ENCODE measurements at regions of chr22 and their contacts with region 1.

Region 1: DNA sequence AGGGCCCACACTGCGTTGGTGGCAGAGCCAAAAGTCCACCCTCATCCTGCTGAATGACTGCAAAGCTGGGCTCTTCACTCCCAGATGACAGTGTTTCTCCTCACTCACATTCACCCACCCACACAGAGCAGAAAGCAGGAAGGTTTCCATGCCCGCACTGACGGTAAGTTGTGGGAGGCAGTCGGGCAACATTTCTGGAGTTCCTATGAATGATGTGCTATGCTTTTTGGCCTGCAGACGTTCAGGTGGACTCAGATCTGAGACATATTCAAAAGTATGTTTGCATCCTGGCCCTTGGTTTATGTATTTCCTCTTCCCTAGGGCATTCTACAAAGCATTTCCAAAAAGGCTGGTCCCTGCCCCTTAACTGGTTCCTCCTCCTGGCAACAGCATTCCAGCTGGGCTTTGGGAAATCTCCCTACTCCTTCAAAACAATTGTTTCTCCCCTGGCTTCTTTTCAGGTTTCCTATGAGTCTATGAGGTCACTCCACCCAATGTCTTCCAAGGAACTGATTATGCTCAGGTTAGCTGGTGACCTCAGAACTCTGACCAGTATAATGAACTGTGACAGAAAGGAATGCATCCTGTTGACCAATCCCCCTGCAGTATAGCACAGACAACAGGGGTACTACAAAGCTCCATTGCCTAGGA is 36.4 kb downstream of the PACSIN2 start:
- DNase-seq: no peak
- ATAC-seq: peak; percentile 75 to 85
- H3K4me3 ChIP-seq: no peak overlapping the region
- H3K27ac ChIP-seq: peak overlapping the region; percentile 30 to 65 (median 46)
- H3K4me1 ChIP-seq: peaks cover 31 to 40% of the 10 kb centered on the region in 2 donors
- H3K27me3 ChIP-seq: no peaks in the 10 kb centered on the region
- CTCF ChIP-seq: no peak
- POLR2A ChIP-seq: no peak

Region 2: DNA sequence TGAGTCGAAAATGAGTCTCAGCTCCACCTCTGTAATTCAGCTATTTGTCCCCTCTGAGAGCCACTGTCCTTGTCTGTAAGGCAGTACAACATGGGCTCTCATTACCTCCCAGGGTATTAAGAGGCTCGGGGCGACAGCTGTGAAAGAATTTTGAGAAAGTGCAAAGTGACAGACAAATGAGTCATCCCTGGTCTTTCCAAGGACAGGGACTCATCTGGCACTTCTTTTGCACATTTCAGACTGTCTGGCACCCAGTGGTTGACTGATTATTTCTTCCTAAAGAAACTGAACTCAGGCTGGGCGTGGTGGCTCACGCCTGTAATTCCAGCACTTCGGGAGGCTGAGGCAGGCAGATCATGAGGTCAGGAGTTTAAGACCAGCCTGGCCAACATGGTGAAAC is 59.4 kb before region 1 on chr22:
- in situ Hi-C with region 1: loop called in 1 of 4 experiments (anchors 10 kb)
- intact Hi-C with region 1: no loop called
- DNase-seq: peak in 1 of 2 donors; percentile 65
- ATAC-seq: peak; percentile 57 to 71
- H3K4me3 ChIP-seq: no peak overlapping the region
- H3K27ac ChIP-seq: peak overlapping the region in 3 of 4 donors; percentile 1 to 68 (median 41)
- H3K4me1 ChIP-seq: peaks cover 48 to 86% of the 10 kb centered on the region in 2 donors
- H3K27me3 ChIP-seq: no peaks in the 10 kb centered on the region
- CTCF ChIP-seq: no peak
- POLR2A ChIP-seq: no peak

Region 3: DNA sequence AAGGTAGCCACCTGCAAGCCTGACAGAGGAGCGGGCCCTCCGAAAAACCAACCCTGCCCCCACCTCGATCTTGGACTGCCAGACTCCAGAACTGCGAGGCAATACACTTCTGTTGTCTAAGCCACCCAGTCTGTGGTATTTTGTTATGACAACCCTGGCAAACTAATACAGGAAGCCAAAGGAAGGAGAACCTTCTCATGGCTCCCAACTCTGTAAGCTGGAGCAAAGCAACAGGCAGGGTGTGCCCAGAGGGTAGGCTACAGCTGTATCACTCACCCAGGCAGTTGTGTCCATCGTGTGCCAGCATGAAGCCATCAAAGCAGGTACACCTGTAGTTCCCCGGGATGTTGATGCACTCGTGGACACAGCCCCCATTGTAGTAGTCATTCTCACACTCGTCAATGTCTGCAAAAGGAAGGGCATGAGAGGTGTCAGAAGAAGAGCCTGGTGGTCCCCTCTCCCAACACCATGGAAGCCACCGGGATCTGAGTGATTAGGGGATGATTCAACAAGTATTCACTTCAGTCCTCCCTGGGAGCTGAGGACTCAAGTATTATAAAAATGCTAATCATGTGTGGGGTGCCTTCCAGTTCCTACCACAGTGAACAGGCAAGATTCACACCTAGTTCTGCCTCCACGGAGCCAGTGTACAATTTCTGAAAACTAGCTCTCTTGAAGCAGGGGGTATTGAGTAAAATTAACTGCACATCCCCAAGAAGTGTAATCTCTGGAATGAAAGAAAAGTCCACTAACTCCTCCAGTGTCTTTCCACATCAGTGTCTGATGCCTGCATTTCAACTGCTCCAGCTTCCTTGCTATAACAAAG is 341.3 kb after region 1 on chr22:
- in situ Hi-C with region 1: no loop called
- intact Hi-C with region 1: no loop called
- DNase-seq: no peak
- ATAC-seq: no peak
- H3K4me3 ChIP-seq: no peak overlapping the region
- H3K27ac ChIP-seq: no peak overlapping the region
- H3K4me1 ChIP-seq: no peaks in the 10 kb centered on the region
- H3K27me3 ChIP-seq: peaks cover 0 to 3% (median 0%) of the 10 kb centered on the region in 3 donors
- CTCF ChIP-seq: no peak
- POLR2A ChIP-seq: no peak